PC-3 (cell line): ENCODE measurements at regions of chr20 and their contacts with region 1.

Region 1: GRCh38 chr20:25390538-25391528 is at the start of gene ABHD12:
- DNase-seq: peak; percentile 98
- ATAC-seq: peak; percentile 87
- H3K4me3 ChIP-seq: peak within 1 kb of the TSS; percentile 98
- H3K27ac ChIP-seq: peak within 1 kb of the TSS; percentile 47
- H3K4me1 ChIP-seq: peaks cover 23% of the 10 kb centered on the region
- H3K27me3 ChIP-seq: no peaks in the 10 kb centered on the region
- CTCF ChIP-seq: no peak
- total RNA-seq, gene ABHD12: 48.3 and 64.2 TPM in 2 replicates

Region 2: GRCh38 chr20:25195014-25195961 is 195.5 kb before region 1 on chr20 and contains the start of gene ENTPD6:
- CTCF ChIA-PET with region 1: no interaction called
- POLR2A ChIA-PET with region 1: no interaction called
- intact Hi-C with region 1: loop called (anchors 10 kb)
- DNase-seq: peak; percentile 93
- ATAC-seq: peak; percentile 67
- H3K4me3 ChIP-seq: peak within 1 kb of the TSS; percentile 86
- H3K27ac ChIP-seq: peak within 1 kb of the TSS; percentile 76
- H3K4me1 ChIP-seq: peaks cover 37% of the 10 kb centered on the region
- H3K27me3 ChIP-seq: no peaks in the 10 kb centered on the region
- CTCF ChIP-seq: peak; percentile 41; the same call in 1 of the 2 replicates
- total RNA-seq, gene ENTPD6: 122 and 150 TPM in 2 replicates

Region 3: GRCh38 chr20:25353747-25354705 is 36.8 kb before region 1 on chr20:
- CTCF ChIA-PET with region 1: interaction called, 3 read pairs
- POLR2A ChIA-PET with region 1: interaction called, 3 read pairs
- intact Hi-C with region 1: loop called (anchors 2 kb)
- DNase-seq: peak; percentile 91
- ATAC-seq: peak; percentile 84
- H3K4me3 ChIP-seq: peak overlapping the region; percentile 17; the same call in 1 of the 2 replicates
- H3K27ac ChIP-seq: peak overlapping the region; percentile 57
- H3K4me1 ChIP-seq: peaks cover 27% of the 10 kb centered on the region
- H3K27me3 ChIP-seq: no peaks in the 10 kb centered on the region
- CTCF ChIP-seq: no peak

Region 4: DNA sequence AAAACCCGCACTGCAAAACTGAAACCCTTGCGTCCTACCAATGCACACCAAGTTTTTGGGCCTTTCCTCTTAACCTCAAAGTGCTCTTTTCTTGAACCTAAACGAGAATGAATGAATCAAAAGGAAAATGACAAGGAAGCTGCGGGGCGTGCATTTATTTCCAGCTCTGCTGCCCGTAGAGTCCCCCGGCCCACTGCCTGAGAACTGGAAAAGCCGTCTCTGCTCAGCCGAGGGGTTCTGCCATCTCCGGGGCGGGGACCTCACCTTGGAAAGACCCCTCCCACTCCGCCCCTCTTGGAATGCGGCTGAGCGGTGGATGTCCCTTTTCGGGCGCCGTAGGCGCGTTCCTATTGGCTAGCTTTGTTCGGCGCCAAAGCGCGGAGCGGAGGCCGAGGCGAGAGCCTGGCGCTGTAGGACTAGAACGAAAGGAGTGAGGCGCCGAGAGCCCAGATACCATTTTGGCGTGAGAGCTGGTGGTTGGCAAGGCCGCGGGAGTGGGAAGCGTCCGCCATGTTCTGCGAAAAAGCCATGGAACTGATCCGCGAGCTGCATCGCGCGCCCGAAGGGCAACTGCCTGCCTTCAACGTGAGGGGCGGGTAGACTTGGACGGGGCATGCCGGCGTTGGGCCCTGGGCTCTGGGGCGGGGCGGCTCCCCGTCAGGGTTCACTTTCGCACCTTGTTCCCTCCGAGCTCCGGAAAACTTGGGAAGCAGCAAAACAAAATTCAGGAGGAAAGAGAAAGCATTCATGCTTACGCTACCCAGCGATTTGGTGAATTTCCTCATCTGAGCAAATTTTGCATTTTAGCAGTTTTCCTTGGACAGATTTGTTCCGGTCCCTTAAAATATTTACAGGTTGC is 16.7 kb after region 1 on chr20 and contains the start of gene GINS1:
- CTCF ChIA-PET with region 1: no interaction called
- POLR2A ChIA-PET with region 1: no interaction called
- intact Hi-C with region 1: no loop called
- DNase-seq: peak; percentile 98
- ATAC-seq: peak; percentile 93
- H3K4me3 ChIP-seq: peak within 1 kb of the TSS; percentile 91
- H3K27ac ChIP-seq: peak within 1 kb of the TSS; percentile 62
- H3K4me1 ChIP-seq: peaks cover 18% of the 10 kb centered on the region
- H3K27me3 ChIP-seq: no peaks in the 10 kb centered on the region
- CTCF ChIP-seq: no peak
- total RNA-seq, gene GINS1: 27.5 and 28.1 TPM in 2 replicates